Caco-2 (cell line): ENCODE measurements at regions of chr5 and their contacts with region 1.

Region 1: DNA sequence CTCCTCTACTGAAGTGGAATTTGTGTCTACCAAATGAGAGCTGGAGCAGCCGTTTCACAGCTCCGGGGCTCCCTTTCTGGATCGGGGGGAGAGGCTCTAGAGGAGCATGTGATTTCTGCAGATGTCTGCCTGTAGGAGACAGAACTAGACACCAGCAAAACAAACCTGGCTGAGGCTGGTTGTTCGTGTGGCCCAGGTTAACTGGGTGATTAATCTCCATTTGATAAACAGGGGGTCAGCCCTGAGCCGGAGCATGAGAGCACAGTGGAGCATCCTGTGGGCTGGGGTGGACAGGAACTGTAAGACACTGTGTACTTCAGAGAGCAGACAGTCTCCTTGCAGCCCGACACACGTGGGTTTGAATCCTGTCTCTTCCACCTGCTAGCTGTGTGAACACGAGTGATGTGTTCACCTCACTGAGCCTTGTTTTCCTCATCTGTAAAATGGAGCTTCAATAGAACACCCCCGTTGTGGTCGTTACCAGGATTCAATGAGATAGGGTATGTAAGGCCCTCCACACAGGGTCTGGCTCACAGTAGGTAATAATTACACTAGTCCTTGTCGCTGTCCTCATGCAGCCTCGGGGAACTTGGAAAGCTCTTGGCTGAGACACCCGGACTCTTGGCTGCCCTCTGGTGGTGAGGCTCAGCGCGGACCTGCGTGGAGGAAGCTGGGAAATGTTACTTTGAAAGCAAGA is 12.9 kb downstream of the CXCL14 start:
- DNase-seq: peak; percentile 78 to 86
- H3K4me3 ChIP-seq: no peak overlapping the region
- H3K4me3 Mint-ChIP-seq: no peak overlapping the region
- H3K27ac Mint-ChIP-seq: no peak overlapping the region
- H3K4me1 ChIP-seq: no peaks in the 10 kb centered on the region; the same call in 1 of the 2 replicates
- H3K4me1 Mint-ChIP-seq: peaks cover 2% of the 10 kb centered on the region
- H3K27me3 ChIP-seq: no peaks in the 10 kb centered on the region
- H3K27me3 Mint-ChIP-seq: no peaks in the 10 kb centered on the region
- CTCF ChIP-seq: peak; percentile 88 to 97

Region 2: DNA sequence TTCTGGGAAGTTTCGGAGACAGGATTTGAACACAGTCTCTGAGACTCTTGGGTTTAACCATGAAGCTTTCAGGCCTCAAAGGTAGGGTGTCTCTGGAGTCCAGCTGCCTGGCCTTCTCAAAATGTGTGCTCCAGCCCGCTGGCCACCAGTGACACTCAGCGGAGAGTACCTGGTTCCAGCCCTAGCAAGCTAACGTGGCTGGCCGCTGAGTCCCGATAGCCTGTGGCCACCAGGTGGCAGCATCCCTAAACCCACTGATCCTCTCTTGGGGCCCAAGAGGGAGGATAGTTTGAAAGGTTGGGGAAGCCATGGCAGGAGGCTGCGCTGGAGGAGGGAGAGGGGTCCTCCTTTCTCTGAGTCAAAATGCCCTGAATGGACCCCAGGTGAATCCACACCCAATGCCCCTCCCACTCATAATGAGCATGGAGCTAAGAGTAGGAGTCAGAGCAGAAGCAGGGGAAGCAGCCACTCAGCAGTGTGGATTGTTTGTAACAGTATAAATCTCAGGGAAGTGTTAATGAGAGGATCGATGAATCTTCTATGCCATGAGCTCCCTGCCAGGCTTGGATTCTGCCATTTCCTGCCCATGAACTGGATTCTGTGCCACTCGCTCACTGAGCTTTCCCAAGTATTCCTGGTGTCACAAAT is 108.3 kb before region 1 on chr5:
- CTCF ChIA-PET with region 1: interaction called, 38 read pairs
- POLR2A ChIA-PET with region 1: no interaction called
- intact Hi-C with region 1: loop called (anchors 1 kb)
- DNase-seq: peak; percentile 69 to 72
- H3K4me3 ChIP-seq: no peak overlapping the region
- H3K4me3 Mint-ChIP-seq: no peak overlapping the region
- H3K27ac Mint-ChIP-seq: no peak overlapping the region
- H3K4me1 ChIP-seq: peaks cover 3% of the 10 kb centered on the region; the same call in 1 of the 2 replicates
- H3K4me1 Mint-ChIP-seq: no peaks in the 10 kb centered on the region
- H3K27me3 ChIP-seq: no peaks in the 10 kb centered on the region
- H3K27me3 Mint-ChIP-seq: peaks cover 16% of the 10 kb centered on the region
- CTCF ChIP-seq: peak; percentile 54 to 85

Region 3: DNA sequence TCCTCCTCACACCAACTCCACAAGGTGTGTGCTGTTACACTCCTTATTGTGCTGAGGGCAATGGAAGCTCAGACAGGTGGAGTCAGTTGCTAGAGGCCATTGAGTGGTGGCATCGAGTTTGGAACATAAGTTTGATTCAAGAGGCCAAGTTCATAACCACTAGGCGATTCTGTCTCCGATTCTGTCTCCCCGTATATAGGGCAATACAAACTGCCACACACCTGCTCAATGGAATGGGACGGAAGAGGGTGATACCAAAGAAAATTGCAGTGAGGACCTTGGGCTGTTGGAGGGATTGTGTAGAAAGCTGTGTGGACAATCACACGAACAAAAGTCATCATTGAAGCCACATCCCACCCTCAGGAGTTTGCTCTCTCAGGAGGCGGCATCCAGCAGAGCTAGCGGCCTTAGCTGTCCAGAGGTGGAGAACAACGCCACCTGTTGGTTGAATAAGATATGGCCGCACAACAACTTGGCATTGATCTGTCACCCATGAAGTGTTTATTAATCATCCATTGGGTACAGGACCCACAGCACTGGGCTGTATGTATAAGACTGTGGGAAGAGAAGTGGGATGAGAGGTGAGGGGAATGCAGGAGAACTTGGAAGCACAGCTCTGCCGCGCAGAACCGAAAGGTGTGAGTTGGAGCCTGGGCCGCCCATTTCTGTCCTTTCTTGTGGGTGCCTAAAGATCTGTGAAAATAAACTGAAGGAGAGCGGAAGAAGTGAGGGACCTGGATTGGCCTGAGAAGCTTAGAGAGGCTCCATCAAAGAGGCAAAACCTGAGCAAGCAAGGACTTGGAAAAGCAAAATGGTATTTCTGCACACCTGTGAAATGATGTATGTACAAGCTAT is 14.1 kb before region 1 on chr5:
- CTCF ChIA-PET with region 1: interaction called, 82 read pairs
- POLR2A ChIA-PET with region 1: interaction called, 3 read pairs
- intact Hi-C with region 1: loop called (anchors 1 kb)
- DNase-seq: peak; percentile 78 to 82
- H3K4me3 ChIP-seq: no peak overlapping the region
- H3K4me3 Mint-ChIP-seq: no peak overlapping the region
- H3K27ac Mint-ChIP-seq: no peak overlapping the region
- H3K4me1 ChIP-seq: no peaks in the 10 kb centered on the region
- H3K4me1 Mint-ChIP-seq: peaks cover 6% of the 10 kb centered on the region
- H3K27me3 ChIP-seq: no peaks in the 10 kb centered on the region
- H3K27me3 Mint-ChIP-seq: peaks cover 10% of the 10 kb centered on the region
- CTCF ChIP-seq: peak; percentile 80 to 82

Region 4: GRCh38 chr5:135729321-135729786 is 163.5 kb after region 1 on chr5:
- CTCF ChIA-PET with region 1: interaction called, 22 read pairs
- POLR2A ChIA-PET with region 1: no interaction called
- intact Hi-C with region 1: loop called (anchors 1 kb)
- DNase-seq: peak in 1 of 2 experiments; percentile 34
- H3K4me3 ChIP-seq: no peak overlapping the region
- H3K4me3 Mint-ChIP-seq: no peak overlapping the region
- H3K27ac Mint-ChIP-seq: no peak overlapping the region
- H3K4me1 ChIP-seq: no peaks in the 10 kb centered on the region
- H3K4me1 Mint-ChIP-seq: no peaks in the 10 kb centered on the region
- H3K27me3 ChIP-seq: no peaks in the 10 kb centered on the region
- H3K27me3 Mint-ChIP-seq: no peaks in the 10 kb centered on the region
- CTCF ChIP-seq: peak; percentile 37 to 59

Region 5: GRCh38 chr5:135834639-135835529 is 269.0 kb after region 1 on chr5 and contains the start of gene SLC25A48:
- CTCF ChIA-PET with region 1: interaction called, 28 read pairs
- POLR2A ChIA-PET with region 1: no interaction called
- intact Hi-C with region 1: loop called (anchors 1 kb)
- DNase-seq: peak; percentile 83 to 86
- H3K4me3 ChIP-seq: peak within 1 kb of the TSS; percentile 57
- H3K4me3 Mint-ChIP-seq: peak within 1 kb of the TSS; percentile 74
- H3K27ac Mint-ChIP-seq: no peak within 1 kb of the TSS
- H3K4me1 ChIP-seq: no peaks in the 10 kb centered on the region
- H3K4me1 Mint-ChIP-seq: peaks cover 7% of the 10 kb centered on the region
- H3K27me3 ChIP-seq: peaks cover 4% of the 10 kb centered on the region; the same call in 1 of the 2 replicates
- H3K27me3 Mint-ChIP-seq: peaks cover 36% of the 10 kb centered on the region
- CTCF ChIP-seq: peak; percentile 21 to 84
- total RNA-seq, gene SLC25A48: 1.6 and 3.2 TPM in 2 replicates